HAP-1 (cell line): ENCODE measurements at regions of chrX and their contacts with region 1.

Region 1: GRCh38 chrX:23333842-23334520 is 668 bp upstream of the PTCHD1 start:
- DNase-seq: peak in 1 of 2 experiments; percentile 33
- H3K4me3 ChIP-seq: no peak overlapping the region
- H3K4me1 ChIP-seq: no peaks in the 10 kb centered on the region
- H3K27me3 ChIP-seq: peaks cover 67% of the 10 kb centered on the region

Region 2: GRCh38 chrX:22135994-22136684 is 1197.8 kb before region 1 on chrX:
- in situ Hi-C with region 1: loop called (anchors 25 kb)
- DNase-seq: peak; percentile 61 to 63
- H3K4me3 ChIP-seq: no peak overlapping the region
- H3K4me1 ChIP-seq: peaks cover 2% of the 10 kb centered on the region; the same call in 1 of the 2 replicates
- H3K27me3 ChIP-seq: no peaks in the 10 kb centered on the region